ENCODE measurements at regions of chr14 and their contacts with region 1.

Region 1: GRCh38 chr14:78709795-78710557 is 539.8 kb downstream of the NRXN3 start:
- DNase-seq: no peak
- H3K4me3 ChIP-seq: no peak overlapping the region
- H3K27ac ChIP-seq: no peak overlapping the region
- H3K4me1 ChIP-seq: no peaks in the 10 kb centered on the region
- H3K27me3 ChIP-seq: no peaks in the 10 kb centered on the region
- CTCF ChIP-seq: no peak
- EP300 ChIP-seq: no peak
- POLR2A ChIP-seq: no peak
- RAD21 ChIP-seq: no peak

Region 2: DNA sequence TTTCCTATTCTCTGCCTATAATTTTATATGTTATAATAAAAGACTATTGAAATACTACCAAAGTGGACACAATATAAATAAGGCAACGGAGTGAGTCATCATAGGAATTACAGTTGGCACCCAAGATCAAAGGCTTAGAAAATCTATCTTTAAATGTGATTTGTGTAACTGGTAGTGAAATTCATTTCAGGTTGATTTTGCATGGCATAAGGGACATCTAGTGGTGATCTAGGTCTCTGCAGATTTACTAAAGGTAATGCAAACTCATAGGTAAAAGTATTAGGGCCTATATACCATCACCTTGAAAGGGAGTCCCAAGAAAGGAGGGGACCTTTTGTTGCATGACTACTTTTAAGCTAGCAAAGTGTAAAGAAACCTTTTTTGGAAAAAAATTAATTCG is 12.6 kb before region 1 on chr14:
- CTCF ChIA-PET with region 1: interaction called, 19 read pairs
- POLR2A ChIA-PET with region 1: no interaction called
- DNase-seq: no peak
- H3K4me3 ChIP-seq: no peak overlapping the region
- H3K27ac ChIP-seq: no peak overlapping the region
- H3K4me1 ChIP-seq: no peaks in the 10 kb centered on the region
- H3K27me3 ChIP-seq: no peaks in the 10 kb centered on the region
- CTCF ChIP-seq: peak in 2 of 3 experiments; percentile 47 to 69; a peak in 2 of 4 replicates
- EP300 ChIP-seq: no peak
- POLR2A ChIP-seq: no peak
- RAD21 ChIP-seq: peak; percentile 77 to 83